Activated CD8-positive, alpha-beta memory T cell treated with anti-CD3 and anti-CD28 coated beads, Interleukin-2, amount 10 ng/mL, durations not matched to agents 7 days and 5 days (primary cell): ENCODE measurements at regions of chr1 and their contacts with region 1.

Region 1: DNA sequence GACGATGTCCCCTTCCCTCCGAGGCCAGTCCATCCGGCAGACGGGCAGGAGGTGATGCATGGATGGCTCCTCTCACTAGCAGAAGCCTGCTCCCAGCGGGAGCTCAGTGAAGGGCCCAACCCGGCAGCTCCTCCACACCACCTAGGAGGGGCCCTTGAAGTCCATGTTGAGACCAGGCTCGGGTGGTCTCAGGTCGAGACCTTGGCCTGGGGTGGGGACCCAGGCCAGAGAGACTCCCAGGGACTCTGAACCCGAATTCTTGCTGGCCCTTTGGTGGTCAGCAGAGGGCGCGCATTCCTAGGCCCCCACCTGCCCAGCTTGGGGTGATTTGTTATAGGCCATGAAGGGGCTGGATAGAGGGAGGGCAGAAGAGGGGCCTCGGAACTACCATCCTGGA is 642 bp upstream of the NT5C1A start:
- DNase-seq: peak; percentile 53
- ATAC-seq: peak; percentile 30
- H3K4me3 Mint-ChIP-seq: no peak overlapping the region
- H3K27ac Mint-ChIP-seq: no peak overlapping the region
- H3K4me1 Mint-ChIP-seq: peaks cover 10% of the 10 kb centered on the region
- H3K27me3 Mint-ChIP-seq: peaks cover 39% of the 10 kb centered on the region

Region 2: DNA sequence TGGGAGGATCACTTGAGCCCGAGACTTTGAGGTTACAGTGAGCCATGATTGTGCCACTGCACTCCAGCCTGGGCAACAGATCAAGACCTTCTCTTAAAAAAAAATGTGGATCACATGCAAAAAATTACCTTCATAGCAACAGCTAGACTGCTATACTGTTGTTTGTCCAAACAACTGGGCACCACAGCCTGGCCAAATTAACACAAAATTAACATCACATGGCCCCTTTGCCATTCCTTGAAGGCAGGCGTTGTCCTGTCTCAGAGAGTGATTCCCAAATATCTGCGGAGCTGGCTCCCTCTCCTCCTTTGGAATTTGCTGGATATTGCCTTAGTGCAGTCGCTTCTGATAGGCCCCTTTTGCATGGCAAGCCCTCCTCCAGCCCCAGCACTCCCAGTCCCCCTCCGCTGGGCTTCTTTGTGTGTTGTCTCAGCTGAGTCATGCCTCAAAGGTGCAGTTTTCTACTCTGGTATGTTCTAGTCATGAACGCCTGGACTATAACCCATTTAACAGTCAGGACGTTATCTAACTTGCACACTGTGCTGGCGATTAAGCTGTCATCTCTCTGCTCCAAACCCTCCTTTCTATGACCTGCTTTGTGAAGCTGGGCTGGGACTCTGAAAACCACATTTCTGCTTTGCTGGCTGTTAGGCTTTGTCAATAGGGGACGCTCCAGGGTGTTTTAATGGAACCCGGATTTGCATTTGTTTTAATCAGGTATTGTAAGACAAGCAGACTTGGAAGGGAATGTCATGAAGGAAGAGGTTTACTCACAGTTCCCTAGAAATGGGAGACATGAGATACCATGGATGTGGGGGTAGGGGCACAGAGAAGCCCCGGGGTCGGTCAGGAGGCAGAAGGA is 38.8 kb after region 1 on chr1:
- CTCF ChIA-PET with region 1: interaction called, 10 read pairs
- DNase-seq: no peak
- ATAC-seq: no peak
- H3K4me3 Mint-ChIP-seq: no peak overlapping the region
- H3K27ac Mint-ChIP-seq: no peak overlapping the region
- H3K4me1 Mint-ChIP-seq: no peaks in the 10 kb centered on the region
- H3K27me3 Mint-ChIP-seq: peaks cover 37% of the 10 kb centered on the region

Region 3: DNA sequence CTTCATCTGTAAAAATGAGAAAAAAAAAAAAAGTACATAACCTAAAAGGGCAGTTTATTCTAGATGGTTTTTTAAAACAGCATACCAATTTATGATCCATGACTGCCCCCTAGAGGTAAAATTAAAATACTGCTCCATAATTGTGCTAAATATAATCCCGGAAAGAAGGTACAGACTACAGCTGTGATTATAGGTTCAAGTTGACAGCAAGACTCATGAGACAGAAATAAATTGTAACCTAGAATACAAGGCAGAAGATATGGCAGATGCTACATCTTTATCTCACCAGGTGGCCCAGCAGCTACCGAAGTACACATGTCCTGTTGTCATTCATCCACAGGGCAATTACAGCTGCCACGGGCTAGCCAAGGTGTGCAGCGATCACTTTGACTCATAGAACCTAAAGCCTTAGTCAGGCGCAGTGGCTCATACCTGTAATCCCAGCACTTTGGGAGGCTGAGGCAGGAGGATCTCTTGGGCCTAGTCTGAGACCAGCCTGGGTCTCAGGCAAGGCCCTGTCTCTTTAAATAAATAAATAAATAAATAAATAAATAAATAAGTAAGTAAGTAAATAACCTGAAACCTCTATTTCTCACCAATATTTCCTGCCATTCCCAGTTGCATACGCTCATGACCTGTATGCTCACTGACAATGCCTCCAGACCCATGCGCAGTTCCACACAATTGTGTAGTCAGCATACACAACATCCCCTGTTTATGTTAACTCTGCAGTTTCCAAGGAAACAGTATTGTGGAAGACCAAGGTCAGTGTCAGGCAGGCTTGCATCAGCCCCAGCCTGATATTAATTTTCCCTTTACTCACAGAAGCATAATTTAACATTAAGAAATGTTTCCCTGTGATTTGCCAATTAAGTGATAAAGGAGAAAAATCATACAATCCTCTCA is 47.8 kb after region 1 on chr1:
- CTCF ChIA-PET with region 1: interaction called, 22 read pairs
- DNase-seq: no peak
- ATAC-seq: peak; percentile 67
- H3K4me3 Mint-ChIP-seq: no peak overlapping the region
- H3K27ac Mint-ChIP-seq: no peak overlapping the region
- H3K4me1 Mint-ChIP-seq: no peaks in the 10 kb centered on the region
- H3K27me3 Mint-ChIP-seq: peaks cover 63% of the 10 kb centered on the region